Caco-2 (cell line): ENCODE measurements at regions of chr7 and their contacts with region 1.

Region 1: DNA sequence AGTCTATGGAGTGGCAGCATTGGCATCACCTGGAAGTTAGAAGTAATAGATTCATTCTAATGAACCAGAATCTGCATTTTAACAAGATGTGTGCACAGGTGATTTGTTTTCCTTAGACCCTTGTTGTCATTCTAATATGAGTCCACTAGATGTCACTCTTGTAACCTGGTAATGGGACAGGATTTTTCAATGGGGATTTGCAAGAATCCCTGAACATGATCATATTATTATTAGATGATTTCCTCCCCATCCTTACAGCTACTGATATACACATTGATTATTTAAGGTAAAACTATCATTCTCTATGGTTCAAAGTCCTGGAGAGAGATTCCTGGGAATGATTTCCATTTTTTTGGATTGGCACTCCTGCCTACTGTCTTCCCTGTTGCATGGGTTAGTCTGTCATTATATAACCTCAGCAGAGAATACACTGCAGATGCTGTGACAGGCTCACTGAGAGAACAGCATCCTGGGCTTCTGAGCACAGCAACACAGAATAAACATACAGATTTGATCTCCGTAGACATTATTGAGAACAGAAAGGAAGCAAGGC is 194.9 kb downstream of the SUGCT start:
- DNase-seq: peak in 1 of 2 experiments; percentile 42
- H3K4me3 ChIP-seq: no peak overlapping the region
- H3K4me3 Mint-ChIP-seq: no peak overlapping the region
- H3K27ac Mint-ChIP-seq: no peak overlapping the region
- H3K4me1 ChIP-seq: no peaks in the 10 kb centered on the region
- H3K4me1 Mint-ChIP-seq: no peaks in the 10 kb centered on the region
- H3K27me3 ChIP-seq: no peaks in the 10 kb centered on the region
- H3K27me3 Mint-ChIP-seq: no peaks in the 10 kb centered on the region
- CTCF ChIP-seq: peak; percentile 60 to 71

Region 2: DNA sequence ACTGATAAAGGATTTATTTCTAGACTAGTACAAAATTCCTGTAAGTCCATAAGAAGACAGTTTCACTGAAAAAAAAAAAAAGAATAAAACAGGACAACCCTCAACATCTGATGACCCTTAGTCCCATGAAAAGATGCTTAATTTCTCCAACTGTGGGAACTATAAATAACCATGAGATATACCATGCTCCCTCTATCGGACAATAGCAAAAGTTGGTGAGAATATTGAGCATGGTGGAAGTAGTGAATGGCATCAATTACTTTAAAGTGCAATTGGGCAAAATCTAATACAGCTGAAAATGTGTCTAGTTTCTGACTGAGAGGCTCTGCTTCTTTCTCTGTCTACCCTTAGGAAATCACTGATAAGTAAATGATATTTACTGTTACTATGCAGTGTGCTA is 154.0 kb after region 1 on chr7:
- CTCF ChIA-PET with region 1: no interaction called
- POLR2A ChIA-PET with region 1: no interaction called
- intact Hi-C with region 1: loop called (anchors 5 kb)
- DNase-seq: no peak
- H3K4me3 ChIP-seq: no peak overlapping the region
- H3K4me3 Mint-ChIP-seq: no peak overlapping the region
- H3K27ac Mint-ChIP-seq: no peak overlapping the region
- H3K4me1 ChIP-seq: no peaks in the 10 kb centered on the region
- H3K4me1 Mint-ChIP-seq: no peaks in the 10 kb centered on the region
- H3K27me3 ChIP-seq: no peaks in the 10 kb centered on the region
- H3K27me3 Mint-ChIP-seq: no peaks in the 10 kb centered on the region
- CTCF ChIP-seq: peak; percentile 15 to 52

Region 3: DNA sequence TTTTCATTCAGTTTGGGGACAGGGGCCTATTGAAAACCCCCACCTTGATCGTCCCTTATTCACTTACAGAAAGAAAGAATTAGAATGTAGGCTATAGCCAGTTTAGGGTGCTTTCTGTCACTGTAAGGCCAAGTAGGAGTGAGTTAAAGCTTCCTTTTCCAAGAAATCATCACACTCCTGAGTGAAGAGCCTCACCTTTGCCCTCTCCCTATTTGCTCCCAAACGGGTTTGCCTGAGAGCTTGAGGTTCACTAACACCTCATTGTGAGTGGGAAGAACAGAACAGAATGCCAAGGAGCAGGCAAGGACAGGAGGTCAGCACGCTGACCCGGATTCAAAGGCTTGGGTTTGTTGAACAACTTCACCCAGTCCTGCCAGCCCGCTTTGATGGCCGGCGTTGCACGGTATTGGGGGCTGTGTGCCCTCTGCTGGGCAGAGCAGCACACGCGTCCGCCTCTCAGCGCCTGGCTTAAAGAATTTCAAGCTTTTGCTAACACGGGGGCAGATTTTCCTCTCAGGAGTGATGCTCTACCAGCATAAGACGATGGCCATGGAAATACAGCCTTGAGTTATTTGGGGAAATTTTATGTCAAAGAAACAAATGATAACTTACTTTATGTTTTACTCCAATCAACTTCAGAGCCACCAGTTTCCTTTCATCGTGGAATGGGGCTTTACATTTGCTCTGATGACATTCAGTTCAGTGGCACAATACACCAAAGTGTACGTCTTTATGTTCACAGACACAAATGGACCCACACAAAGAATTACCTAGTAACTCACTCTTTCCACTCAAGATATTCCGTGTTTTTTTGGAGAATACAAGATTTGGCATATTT is 275.1 kb after region 1 on chr7:
- CTCF ChIA-PET with region 1: no interaction called
- POLR2A ChIA-PET with region 1: no interaction called
- intact Hi-C with region 1: loop called (anchors 1 kb)
- DNase-seq: peak; percentile 45 to 47
- H3K4me3 ChIP-seq: no peak overlapping the region
- H3K4me3 Mint-ChIP-seq: no peak overlapping the region
- H3K27ac Mint-ChIP-seq: no peak overlapping the region
- H3K4me1 ChIP-seq: peaks cover 3% of the 10 kb centered on the region; the same call in 1 of the 2 replicates
- H3K4me1 Mint-ChIP-seq: no peaks in the 10 kb centered on the region
- H3K27me3 ChIP-seq: no peaks in the 10 kb centered on the region
- H3K27me3 Mint-ChIP-seq: no peaks in the 10 kb centered on the region
- CTCF ChIP-seq: peak; percentile 63 to 68

Region 4: DNA sequence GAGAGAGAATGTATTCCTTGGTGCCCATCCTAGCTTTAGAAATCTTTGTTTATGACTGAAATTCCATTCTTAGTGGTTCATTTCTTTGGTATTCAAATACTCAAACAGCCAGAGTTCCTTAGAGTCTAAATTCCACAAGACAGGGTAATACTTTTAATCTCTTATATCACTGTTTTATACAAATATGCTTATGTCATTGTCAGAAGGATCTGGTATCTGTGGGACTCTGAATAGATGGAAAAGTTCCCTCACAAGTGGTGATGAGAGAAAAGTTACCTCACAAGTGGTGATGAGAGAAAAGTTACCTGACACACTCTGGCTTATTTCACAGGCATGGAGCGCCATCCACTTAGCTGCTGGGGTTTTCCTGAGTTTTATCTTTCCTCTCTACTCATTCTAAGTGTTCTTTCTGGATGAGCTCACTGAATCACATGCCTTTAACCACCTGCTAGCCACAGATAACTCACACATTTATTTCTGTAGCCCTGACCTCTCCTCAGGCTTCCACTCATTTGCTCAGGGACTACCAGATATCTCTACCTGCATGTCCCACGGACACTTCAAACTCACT is 589.1 kb after region 1 on chr7:
- CTCF ChIA-PET with region 1: no interaction called
- POLR2A ChIA-PET with region 1: no interaction called
- intact Hi-C with region 1: loop called (anchors 10 kb)
- DNase-seq: no peak
- H3K4me3 ChIP-seq: no peak overlapping the region
- H3K4me3 Mint-ChIP-seq: no peak overlapping the region
- H3K27ac Mint-ChIP-seq: peak overlapping the region; percentile 4
- H3K4me1 ChIP-seq: peaks cover 22% of the 10 kb centered on the region
- H3K4me1 Mint-ChIP-seq: peaks cover 16% of the 10 kb centered on the region
- H3K27me3 ChIP-seq: no peaks in the 10 kb centered on the region
- H3K27me3 Mint-ChIP-seq: no peaks in the 10 kb centered on the region
- CTCF ChIP-seq: no peak

Region 5: GRCh38 chr7:41705109-41705901 is 1375.6 kb after region 1 on chr7:
- CTCF ChIA-PET with region 1: no interaction called
- POLR2A ChIA-PET with region 1: no interaction called
- intact Hi-C with region 1: loop called (anchors 2 kb)
- DNase-seq: peak; percentile 90 to 91
- H3K4me3 ChIP-seq: peak overlapping the region; percentile 43
- H3K4me3 Mint-ChIP-seq: peak overlapping the region; percentile 78
- H3K27ac Mint-ChIP-seq: no peak overlapping the region
- H3K4me1 ChIP-seq: no peaks in the 10 kb centered on the region
- H3K4me1 Mint-ChIP-seq: peaks cover 14% of the 10 kb centered on the region
- H3K27me3 ChIP-seq: no peaks in the 10 kb centered on the region
- H3K27me3 Mint-ChIP-seq: peaks cover 3% of the 10 kb centered on the region
- CTCF ChIP-seq: peak; percentile 79 to 94